Heart right ventricle (tissue), 16 donors: ENCODE measurements at regions of chr17 and their contacts with region 1.

Region 1: DNA sequence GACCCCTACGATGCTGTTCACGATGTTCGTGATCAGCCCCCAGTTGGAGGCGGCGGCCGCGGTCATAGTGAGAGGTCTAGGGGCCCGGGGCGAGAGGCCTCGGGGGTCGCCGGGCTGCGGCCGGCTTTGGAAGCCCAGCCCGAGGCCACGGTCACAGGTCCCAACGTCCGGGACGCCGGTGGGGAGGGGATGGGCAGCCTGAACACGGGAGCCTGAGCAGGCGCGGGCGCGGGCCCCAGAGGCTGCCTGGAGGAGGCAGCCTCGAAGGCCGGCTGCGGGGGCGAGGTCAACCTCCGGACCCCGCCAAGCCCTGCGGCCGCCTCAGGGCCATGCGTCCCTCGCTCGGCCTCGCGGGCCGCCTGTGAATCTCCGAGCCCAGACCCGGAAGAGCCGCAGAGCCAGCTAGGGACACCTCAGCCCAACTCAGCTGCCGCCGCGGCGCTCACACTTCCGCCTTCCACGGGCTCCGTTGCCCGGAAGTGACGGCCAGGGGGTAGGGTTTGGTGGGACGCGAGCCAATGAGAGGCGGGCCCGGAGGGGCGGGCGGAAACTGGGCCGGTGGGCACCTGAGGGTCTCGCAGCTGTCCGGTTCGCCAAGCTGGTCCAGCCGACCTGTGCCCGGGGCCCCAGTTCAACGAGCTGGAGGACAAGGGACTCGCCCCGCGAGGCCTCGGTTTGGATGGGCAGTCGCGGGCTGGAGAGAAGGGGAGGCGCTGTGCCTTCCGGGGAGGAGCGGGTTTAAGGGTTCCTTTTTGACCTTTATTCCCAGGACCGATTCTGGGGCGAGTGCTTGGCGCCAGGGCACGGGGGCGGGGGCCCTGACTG is at the start of gene SLC38A10:
- DNase-seq: peak; percentile 93 to 94
- ATAC-seq: peak; percentile 92 to 96 (median 94)
- H3K4me3 ChIP-seq: peak within 1 kb of the TSS; percentile 72 to 97 (median 86)
- H3K27ac ChIP-seq: peak within 1 kb of the TSS; percentile 86 to 99 (median 96)
- H3K4me1 ChIP-seq: peaks cover 12 to 47% (median 44%) of the 10 kb centered on the region in 9 donors
- H3K27me3 ChIP-seq: no peaks in the 10 kb centered on the region
- CTCF ChIP-seq: peak in 3 of 9 donors; percentile 23 to 31 (median 30)
- total RNA-seq, gene SLC38A10: 27.8 to 50.0 (median 37.9) TPM

Region 2: GRCh38 chr17:81309070-81309905 is 14.2 kb after region 1 on chr17:
- intact Hi-C with region 1: loop called in 1 of 10 experiments (anchors 1 kb)
- DNase-seq: peak; percentile 92 to 93
- ATAC-seq: peak; percentile 87 to 96 (median 94)
- H3K4me3 ChIP-seq: peak overlapping the region in 9 of 10 donors; percentile 31 to 56 (median 51)
- H3K27ac ChIP-seq: peak overlapping the region; percentile 60 to 90 (median 82)
- H3K4me1 ChIP-seq: peaks cover 12 to 33% (median 21%) of the 10 kb centered on the region in 9 donors
- H3K27me3 ChIP-seq: no peaks in the 10 kb centered on the region
- CTCF ChIP-seq: peak in 8 of 9 donors; percentile 27 to 68 (median 54)

Region 3: GRCh38 chr17:81387100-81388090 is 92.3 kb after region 1 on chr17:
- intact Hi-C with region 1: loop called in 6 of 10 experiments (anchors 5 to 10 kb)
- DNase-seq: peak; percentile 66 to 84
- ATAC-seq: peak; percentile 10 to 79 (median 52)
- H3K4me3 ChIP-seq: peak overlapping the region; percentile 60 to 87 (median 79)
- H3K27ac ChIP-seq: peak overlapping the region; percentile 93 to 99 (median 98)
- H3K4me1 ChIP-seq: peaks cover 28 to 61% (median 51%) of the 10 kb centered on the region in 9 donors
- H3K27me3 ChIP-seq: peaks cover 0 to 38% (median 0%) of the 10 kb centered on the region in 7 donors
- CTCF ChIP-seq: no peak

Region 4: DNA sequence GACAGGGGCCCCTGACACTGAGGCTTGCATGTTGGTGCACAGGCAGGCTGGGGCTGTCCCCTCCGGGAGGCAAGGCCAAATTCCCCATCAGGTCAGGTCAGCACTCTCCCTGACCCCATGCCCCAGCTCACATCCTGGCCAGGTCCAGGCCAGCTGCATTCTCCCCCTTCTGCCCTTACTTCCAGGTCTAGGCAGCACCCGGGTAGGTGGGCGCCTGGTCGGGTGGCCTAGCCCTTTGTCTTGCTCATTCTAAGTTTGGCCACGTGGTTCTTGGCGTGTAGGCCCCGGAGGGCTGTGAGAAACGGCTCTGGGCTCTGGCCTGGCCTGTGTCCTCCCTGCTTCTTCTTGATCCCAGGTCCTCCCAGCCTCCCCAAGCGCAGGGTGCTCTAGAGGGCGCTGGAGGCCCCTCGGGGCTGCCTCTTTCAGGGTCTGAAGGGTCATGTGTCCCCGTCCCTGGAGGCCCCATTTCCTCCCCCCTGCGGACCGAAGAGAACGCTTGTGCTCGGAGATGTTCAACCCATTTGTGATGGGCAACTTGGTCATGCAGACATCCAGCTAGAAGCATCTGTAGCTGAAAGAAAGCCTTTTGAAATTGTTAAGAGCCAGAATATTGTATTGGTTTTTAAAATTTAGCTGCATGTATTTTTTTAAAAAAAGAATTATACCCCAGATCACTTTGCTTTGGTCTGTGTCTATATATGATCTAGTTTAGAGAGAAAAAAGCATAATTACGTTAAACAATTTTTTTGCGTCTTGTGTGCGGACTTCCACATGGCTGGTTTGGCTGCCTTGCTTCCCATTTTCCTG is 106.9 kb after region 1 on chr17:
- intact Hi-C with region 1: loop called in 2 of 10 experiments (anchors 1 to 5 kb)
- DNase-seq: peak in 1 of 2 donors; percentile 69
- ATAC-seq: peak in 6 of 8 donors; percentile 2 to 25 (median 6)
- H3K4me3 ChIP-seq: peak overlapping the region in 8 of 10 donors; percentile 19 to 94 (median 78)
- H3K27ac ChIP-seq: peak overlapping the region; percentile 3 to 99 (median 96)
- H3K4me1 ChIP-seq: peaks cover 45 to 90% (median 66%) of the 10 kb centered on the region in 9 donors
- H3K27me3 ChIP-seq: peaks cover 0 to 28% (median 0%) of the 10 kb centered on the region in 7 donors
- CTCF ChIP-seq: peak in 7 of 9 donors; percentile 14 to 50 (median 37)